Activated B cell treated with CpG ODN at 0.5 μM for 24 hours (primary cell): ENCODE measurements at regions of chr1 and their contacts with region 1.

Region 1: GRCh38 chr1:212608209-212608955 is at the start of gene ATF3:
- DNase-seq: peak; percentile 76
- ATAC-seq: peak; percentile 84
- H3K4me3 Mint-ChIP-seq: peak within 1 kb of the TSS; percentile 95
- H3K27ac Mint-ChIP-seq: peak within 1 kb of the TSS; percentile 90
- H3K4me1 Mint-ChIP-seq: peaks cover 29% of the 10 kb centered on the region
- H3K27me3 Mint-ChIP-seq: peaks cover 32% of the 10 kb centered on the region
- CTCF ChIP-seq: no peak
- total RNA-seq, gene ATF3: 13.1 and 16.8 TPM in 2 replicates

Region 2: GRCh38 chr1:212558693-212559480 is 49.5 kb before region 1 on chr1:
- CTCF ChIA-PET with region 1: interaction called, 4 read pairs
- POLR2A ChIA-PET with region 1: interaction called, 49 read pairs
- intact Hi-C with region 1: loop called (anchors 1 kb)
- DNase-seq: peak; percentile 93
- ATAC-seq: peak; percentile 88
- H3K4me3 Mint-ChIP-seq: peak overlapping the region; percentile 88
- H3K27ac Mint-ChIP-seq: peak overlapping the region; percentile 93
- H3K4me1 Mint-ChIP-seq: peaks cover 13% of the 10 kb centered on the region
- H3K27me3 Mint-ChIP-seq: peaks cover 2% of the 10 kb centered on the region
- CTCF ChIP-seq: no peak

Region 3: DNA sequence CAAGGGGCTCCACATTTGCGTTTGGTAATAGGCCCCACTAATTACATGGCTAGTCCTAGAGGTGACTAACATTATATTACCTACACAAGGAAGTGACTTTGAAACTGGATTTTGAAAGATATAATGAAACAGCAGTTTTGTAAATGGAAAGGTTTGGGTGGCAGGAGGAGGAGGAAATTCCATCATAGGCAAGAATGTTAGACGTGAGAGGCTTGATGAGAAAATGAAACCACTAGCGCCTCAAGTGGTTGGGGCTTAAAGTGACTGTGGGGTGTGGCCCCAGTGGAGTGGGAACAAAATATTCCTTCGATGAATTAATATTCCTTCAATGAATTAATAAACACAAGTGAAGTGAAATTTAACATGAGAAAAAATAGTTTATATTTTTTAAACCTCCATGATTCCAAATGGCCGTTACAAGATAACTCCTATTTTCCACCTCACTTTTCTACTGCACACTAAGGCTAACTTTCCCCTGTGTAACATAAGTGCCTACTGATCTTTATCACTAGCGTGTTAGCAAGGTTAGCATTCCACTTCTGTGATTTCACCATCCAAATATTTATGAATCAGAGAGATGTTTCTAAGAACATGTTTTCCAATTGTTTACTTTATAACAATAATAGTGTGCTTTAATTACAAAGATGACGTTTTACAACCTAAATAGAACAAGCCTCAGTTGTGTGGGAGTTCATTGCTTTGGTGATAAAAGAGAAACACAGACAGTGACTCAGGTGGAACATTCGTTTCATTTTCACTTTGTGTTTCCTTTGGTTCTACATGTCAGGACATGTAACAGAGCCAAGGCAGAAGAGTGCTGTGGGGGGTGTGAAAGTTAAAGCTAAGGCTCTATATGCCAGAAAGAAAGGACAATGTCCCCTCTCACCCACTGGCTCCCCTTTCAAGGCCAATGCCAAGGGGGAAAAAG is 12.3 kb before region 1 on chr1:
- CTCF ChIA-PET with region 1: interaction called, 8 read pairs
- POLR2A ChIA-PET with region 1: interaction called, 18 read pairs
- intact Hi-C with region 1: loop called (anchors 1 kb)
- DNase-seq: no peak
- ATAC-seq: peak; percentile 90
- H3K4me3 Mint-ChIP-seq: peak overlapping the region; percentile 72
- H3K27ac Mint-ChIP-seq: peak overlapping the region; percentile 84
- H3K4me1 Mint-ChIP-seq: peaks cover 16% of the 10 kb centered on the region
- H3K27me3 Mint-ChIP-seq: peaks cover 20% of the 10 kb centered on the region
- CTCF ChIP-seq: no peak

Region 4: DNA sequence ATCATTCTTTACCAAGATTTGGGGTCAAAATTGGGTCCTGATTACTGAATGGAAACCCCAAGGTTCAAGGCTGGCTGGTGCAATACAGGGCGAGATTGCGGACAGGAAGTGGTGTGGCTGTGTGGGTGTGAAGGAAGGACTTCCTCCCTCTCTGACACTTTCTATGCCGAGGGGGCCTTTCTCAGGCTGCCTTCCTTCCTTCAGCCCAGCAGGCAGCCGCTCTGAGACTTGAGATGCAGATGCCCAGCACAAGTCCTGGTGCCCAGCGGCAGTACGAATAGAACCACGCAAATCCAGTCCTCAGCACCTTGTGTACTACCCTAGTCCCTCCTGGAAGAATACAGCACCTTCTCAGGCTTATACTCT is 75.0 kb after region 1 on chr1:
- CTCF ChIA-PET with region 1: no interaction called
- POLR2A ChIA-PET with region 1: interaction called, 13 read pairs
- intact Hi-C with region 1: no loop called
- DNase-seq: no peak
- ATAC-seq: peak; percentile 60
- H3K4me3 Mint-ChIP-seq: peak overlapping the region; percentile 68
- H3K27ac Mint-ChIP-seq: peak overlapping the region; percentile 84
- H3K4me1 Mint-ChIP-seq: peaks cover 45% of the 10 kb centered on the region
- H3K27me3 Mint-ChIP-seq: no peaks in the 10 kb centered on the region
- CTCF ChIP-seq: no peak

Region 5: DNA sequence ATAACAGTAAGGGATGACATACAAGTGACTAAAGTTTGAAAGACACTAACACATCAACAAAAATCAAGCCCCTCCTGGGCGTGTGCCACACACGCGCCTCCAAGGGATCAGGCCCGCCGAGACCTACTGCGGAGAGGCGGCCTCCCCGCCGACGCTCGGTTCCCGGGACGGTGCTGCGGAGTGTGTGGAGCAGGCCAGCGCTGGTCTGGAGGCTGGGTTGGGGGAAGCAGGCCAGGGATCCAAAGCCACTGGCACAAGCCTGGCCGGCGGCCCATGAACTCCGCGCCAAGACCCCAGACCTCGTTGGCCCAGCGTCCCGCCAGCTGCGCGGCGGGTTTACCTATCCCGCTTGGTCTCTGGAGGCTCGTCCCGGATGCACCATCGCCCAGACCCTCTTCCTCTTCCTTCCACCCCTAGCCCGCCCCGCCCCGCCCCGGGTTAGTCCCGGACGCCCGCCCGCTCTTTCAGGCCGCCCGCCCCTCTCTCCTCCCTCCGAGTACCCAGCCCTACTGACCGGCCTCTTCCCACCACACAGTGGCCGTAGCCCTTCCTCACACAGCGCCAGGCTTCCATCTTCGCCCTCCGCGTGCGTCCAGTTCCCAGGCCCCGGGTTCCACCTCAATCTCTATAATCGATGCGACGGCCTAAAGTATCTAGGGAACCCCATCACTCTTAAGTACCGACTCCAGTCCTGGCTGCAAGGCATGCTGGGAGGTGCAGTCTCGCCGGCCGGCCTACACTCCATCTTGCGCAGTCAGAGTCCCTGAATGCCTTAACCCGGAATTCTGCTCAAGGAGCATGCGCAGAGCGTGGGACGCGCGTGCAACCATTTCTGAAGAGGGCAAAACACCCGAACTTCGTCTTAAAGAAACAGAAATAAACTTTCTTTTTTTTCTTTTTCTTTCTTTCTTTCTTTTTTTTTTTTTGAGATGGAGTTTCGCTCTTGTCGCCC is 407.0 kb after region 1 on chr1 and contains the start of gene ANGEL2:
- CTCF ChIA-PET with region 1: no interaction called
- POLR2A ChIA-PET with region 1: interaction called, 3 read pairs
- intact Hi-C with region 1: loop called (anchors 1 kb)
- DNase-seq: peak; percentile 87
- ATAC-seq: peak; percentile 95
- H3K4me3 Mint-ChIP-seq: peak within 1 kb of the TSS; percentile 100
- H3K27ac Mint-ChIP-seq: peak within 1 kb of the TSS; percentile 99
- H3K4me1 Mint-ChIP-seq: peaks cover 20% of the 10 kb centered on the region
- H3K27me3 Mint-ChIP-seq: no peaks in the 10 kb centered on the region
- CTCF ChIP-seq: no peak
- total RNA-seq, gene ANGEL2: 54.1 and 63.3 TPM in 2 replicates